ENCODE measurements at regions of chr1 and their contacts with region 1.

Region 1: DNA sequence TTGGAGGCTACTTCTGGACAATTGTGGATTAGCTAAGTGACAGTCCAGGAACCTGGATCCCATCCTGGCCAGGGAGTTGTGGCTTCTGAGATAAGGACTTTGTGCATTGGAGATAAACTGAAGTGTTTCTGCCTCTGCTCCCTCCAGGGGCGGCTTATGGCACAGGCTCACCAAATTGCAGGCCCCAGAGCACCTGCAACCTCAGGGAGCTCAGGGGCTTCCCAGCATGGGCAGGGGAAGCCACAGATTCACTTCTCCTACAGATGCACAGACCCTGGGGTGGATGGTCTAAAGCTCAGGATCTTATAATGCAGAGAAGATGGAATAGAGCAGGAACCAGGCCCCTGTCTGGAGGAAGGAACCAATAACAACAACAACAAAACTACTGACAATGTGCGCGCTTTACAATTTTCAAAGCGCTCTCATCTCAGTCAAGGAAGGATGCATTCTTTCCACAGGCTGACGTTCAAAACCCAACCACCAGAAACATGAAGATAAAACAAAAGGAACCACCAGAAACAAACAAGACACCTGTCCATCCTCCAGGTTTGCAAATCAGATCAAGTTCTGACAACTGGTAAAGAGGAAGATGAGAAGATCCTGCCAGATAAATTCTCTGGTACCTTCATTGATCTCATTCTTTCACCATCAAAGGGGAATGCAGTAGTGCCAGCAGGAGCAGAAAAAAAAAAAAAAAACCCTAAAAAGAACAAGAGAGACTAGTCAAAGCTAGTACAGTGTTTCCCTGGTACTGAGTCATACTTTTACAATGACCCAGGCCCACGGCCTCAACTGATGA is 121.0 kb upstream of the IRF2BP2 start:
- DNase-seq: peak; percentile 94
- H3K4me3 ChIP-seq: no peak overlapping the region
- H3K27ac ChIP-seq: peak overlapping the region; percentile 83
- H3K4me1 ChIP-seq: peaks cover 17% of the 10 kb centered on the region
- H3K27me3 ChIP-seq: no peaks in the 10 kb centered on the region

Region 2: GRCh38 chr1:234478481-234479309 is 252.3 kb before region 1 on chr1 and contains the start of gene TARBP1:
- in situ Hi-C with region 1: loop called (anchors 25 kb)
- DNase-seq: peak; percentile 91
- H3K4me3 ChIP-seq: peak within 1 kb of the TSS; percentile 92
- H3K27ac ChIP-seq: peak within 1 kb of the TSS; percentile 61
- H3K4me1 ChIP-seq: no peaks in the 10 kb centered on the region
- H3K27me3 ChIP-seq: no peaks in the 10 kb centered on the region
- total RNA-seq, gene TARBP1: 11.9 and 61.0 TPM in 2 replicates

Region 3: DNA sequence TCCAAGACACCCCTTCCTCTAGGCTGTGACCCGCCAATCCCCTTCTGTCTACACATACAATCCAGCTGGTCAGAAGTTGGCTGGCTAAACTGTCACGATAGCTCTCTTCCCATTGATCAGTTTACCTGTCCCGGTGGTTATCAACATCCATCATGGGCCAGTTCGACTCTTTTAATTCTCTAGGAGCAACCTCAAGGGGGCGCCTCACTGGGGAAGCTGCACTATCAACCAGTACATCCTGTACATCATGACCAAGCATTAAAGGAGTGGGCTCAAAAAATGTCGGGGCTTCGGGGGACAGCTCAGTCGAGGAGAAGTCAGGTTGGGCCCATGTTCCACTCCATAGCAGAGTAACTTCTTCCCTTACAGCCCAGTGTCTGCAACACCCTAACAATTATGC is 826.5 kb after region 1 on chr1:
- in situ Hi-C with region 1: no loop called
- DNase-seq: no peak
- H3K4me3 ChIP-seq: no peak overlapping the region
- H3K27ac ChIP-seq: no peak overlapping the region
- H3K4me1 ChIP-seq: no peaks in the 10 kb centered on the region
- H3K27me3 ChIP-seq: no peaks in the 10 kb centered on the region